ENCODE measurements at regions of chr2 and their contacts with region 1.

Region 1: DNA sequence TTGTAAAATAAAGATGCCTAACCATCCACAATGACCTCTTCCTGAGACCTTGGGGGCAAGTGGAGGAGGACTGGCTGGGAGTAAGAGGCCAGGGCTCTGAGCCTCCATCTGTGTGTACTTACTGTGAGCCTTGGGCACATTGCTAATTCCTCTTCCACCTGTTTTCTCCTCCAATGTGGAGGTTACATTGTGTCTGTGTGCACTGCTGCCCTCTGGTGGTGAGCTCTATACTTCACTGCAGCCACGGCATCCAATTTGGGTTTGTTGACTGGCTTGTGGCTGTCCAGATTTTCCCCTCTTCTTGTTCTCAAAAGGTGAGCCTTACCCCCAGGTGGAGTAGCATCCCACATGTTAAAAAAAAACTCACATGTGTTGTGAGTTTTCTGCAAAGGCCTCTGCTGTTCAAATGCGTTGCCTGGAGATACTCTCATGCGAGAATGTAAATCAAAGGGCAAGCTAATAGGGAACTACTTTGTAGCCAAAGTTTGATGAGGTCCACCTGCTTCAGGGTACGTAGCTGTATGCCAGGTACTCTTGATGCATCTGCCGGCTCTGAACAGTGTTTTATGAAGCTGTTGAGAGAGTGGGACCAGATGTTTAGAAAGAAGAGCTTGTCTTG is 80.8 kb downstream of the APOB start:
- DNase-seq: peak; percentile 54 to 68
- H3K4me3 ChIP-seq: no peak overlapping the region
- H3K27ac ChIP-seq: no peak overlapping the region
- H3K4me1 ChIP-seq: no peaks in the 10 kb centered on the region
- H3K27me3 ChIP-seq: no peaks in the 10 kb centered on the region
- CTCF ChIP-seq: peak; percentile 46 to 88 (median 68)
- POLR2A ChIP-seq: no peak

Region 2: GRCh38 chr2:20665956-20666303 is 297.1 kb before region 1 on chr2:
- intact Hi-C with region 1: loop called (anchors 2 kb)
- DNase-seq: no peak
- H3K4me3 ChIP-seq: peak overlapping the region in 1 of 3 donors; percentile 28
- H3K27ac ChIP-seq: no peak overlapping the region
- H3K4me1 ChIP-seq: peaks cover 18 to 31% of the 10 kb centered on the region in 2 donors
- H3K27me3 ChIP-seq: peaks cover 41% of the 10 kb centered on the region
- CTCF ChIP-seq: no peak
- POLR2A ChIP-seq: no peak

Region 3: DNA sequence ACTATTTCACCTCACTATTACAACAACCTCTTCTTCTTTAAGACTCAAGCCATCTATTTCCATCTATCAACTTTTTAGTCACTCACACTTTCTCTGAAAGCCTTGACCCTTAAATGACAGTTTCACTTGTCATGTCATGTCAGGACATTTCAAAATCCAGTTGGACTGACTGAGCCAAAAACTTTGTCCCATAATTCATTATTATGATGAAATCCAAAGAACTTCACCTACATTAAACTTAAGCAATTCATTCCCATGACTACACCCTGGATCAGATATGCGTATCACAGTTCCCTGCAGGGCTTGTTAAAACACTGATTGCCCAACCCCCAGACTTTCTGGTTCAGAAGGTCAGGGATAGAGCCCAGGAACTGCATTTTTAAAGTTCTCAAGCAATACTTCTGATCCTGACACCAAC is 166.7 kb before region 1 on chr2:
- intact Hi-C with region 1: no loop called
- DNase-seq: no peak
- H3K4me3 ChIP-seq: no peak overlapping the region
- H3K27ac ChIP-seq: no peak overlapping the region
- H3K4me1 ChIP-seq: no peaks in the 10 kb centered on the region
- H3K27me3 ChIP-seq: no peaks in the 10 kb centered on the region
- CTCF ChIP-seq: no peak
- POLR2A ChIP-seq: no peak